ENCODE measurements at regions of chr10 and their contacts with region 1.

Region 1: GRCh38 chr10:75772153-75772887 is 340.9 kb downstream of the LRMDA start:
- DNase-seq: no peak
- H3K4me3 ChIP-seq: peak overlapping the region in 1 of 2 donors; percentile 16
- H3K27ac ChIP-seq: peak overlapping the region; percentile 51 to 68
- H3K4me1 ChIP-seq: peaks cover 5% of the 10 kb centered on the region
- H3K27me3 ChIP-seq: no peaks in the 10 kb centered on the region
- CTCF ChIP-seq: no peak
- POLR2A ChIP-seq: no peak

Region 2: GRCh38 chr10:75294866-75295701 is 477.2 kb before region 1 on chr10:
- intact Hi-C with region 1: loop called (anchors 5 kb)
- DNase-seq: peak; percentile 94
- H3K4me3 ChIP-seq: peak overlapping the region; percentile 53 to 69
- H3K27ac ChIP-seq: peak overlapping the region; percentile 92 to 97
- H3K4me1 ChIP-seq: peaks cover 3% of the 10 kb centered on the region
- H3K27me3 ChIP-seq: no peaks in the 10 kb centered on the region
- CTCF ChIP-seq: peak in 3 of 4 experiments; percentile 24 to 50 (median 41)
- POLR2A ChIP-seq: peak; percentile 50

Region 3: DNA sequence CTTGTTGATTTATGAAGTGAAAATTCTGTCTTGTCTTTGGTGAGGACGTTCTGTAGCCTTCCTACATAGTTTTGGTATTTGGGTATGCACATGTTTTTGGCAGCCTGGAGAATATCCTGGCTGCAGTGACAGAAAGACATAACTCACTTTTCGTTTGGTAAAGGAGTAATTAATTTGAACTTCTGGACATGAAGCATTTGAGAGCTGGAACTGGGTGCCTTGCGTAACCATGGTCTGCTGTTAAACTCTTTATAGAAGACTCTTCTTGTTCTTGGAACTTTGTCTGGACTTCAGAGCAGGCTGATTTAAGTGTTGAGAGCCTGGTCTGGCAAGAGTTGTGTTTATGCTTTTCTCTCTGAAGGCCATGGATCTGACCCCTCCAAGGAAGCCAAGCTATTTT is 109.6 kb before region 1 on chr10:
- intact Hi-C with region 1: loop called (anchors 2 kb)
- DNase-seq: peak; percentile 63
- H3K4me3 ChIP-seq: no peak overlapping the region
- H3K27ac ChIP-seq: peak overlapping the region; percentile 60 to 68
- H3K4me1 ChIP-seq: peaks cover 5% of the 10 kb centered on the region
- H3K27me3 ChIP-seq: no peaks in the 10 kb centered on the region
- CTCF ChIP-seq: no peak
- POLR2A ChIP-seq: no peak

Region 4: DNA sequence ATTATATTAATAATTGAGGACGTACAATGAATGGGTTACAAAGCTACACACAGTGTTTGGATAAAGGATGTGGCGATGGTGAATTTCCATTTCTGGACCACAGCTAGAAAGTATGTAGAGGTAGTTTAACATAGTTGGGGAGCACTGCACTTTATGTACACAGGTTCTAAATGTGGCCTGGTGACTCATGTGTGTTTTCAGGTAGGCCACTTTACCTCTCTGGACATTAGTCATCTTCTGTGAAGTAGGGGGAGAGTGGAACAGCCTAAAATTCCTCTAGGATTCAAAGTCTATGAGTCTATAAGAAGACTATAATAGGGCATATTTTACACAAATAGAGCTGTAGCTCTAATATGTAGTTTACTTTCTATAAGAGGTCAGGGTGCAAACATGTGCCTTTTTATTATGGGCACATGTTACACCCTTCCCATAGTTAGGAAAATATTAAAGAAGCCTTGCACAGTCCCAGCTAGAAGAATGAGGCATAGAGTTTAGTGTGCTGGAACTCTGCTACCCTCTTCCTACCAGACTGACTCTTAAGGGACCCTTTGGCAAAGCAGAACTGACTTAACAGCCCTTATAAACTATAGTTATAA is 254.0 kb after region 1 on chr10:
- intact Hi-C with region 1: no loop called
- DNase-seq: no peak
- H3K4me3 ChIP-seq: no peak overlapping the region
- H3K27ac ChIP-seq: no peak overlapping the region
- H3K4me1 ChIP-seq: no peaks in the 10 kb centered on the region
- H3K27me3 ChIP-seq: no peaks in the 10 kb centered on the region
- CTCF ChIP-seq: no peak
- POLR2A ChIP-seq: no peak

Region 5: DNA sequence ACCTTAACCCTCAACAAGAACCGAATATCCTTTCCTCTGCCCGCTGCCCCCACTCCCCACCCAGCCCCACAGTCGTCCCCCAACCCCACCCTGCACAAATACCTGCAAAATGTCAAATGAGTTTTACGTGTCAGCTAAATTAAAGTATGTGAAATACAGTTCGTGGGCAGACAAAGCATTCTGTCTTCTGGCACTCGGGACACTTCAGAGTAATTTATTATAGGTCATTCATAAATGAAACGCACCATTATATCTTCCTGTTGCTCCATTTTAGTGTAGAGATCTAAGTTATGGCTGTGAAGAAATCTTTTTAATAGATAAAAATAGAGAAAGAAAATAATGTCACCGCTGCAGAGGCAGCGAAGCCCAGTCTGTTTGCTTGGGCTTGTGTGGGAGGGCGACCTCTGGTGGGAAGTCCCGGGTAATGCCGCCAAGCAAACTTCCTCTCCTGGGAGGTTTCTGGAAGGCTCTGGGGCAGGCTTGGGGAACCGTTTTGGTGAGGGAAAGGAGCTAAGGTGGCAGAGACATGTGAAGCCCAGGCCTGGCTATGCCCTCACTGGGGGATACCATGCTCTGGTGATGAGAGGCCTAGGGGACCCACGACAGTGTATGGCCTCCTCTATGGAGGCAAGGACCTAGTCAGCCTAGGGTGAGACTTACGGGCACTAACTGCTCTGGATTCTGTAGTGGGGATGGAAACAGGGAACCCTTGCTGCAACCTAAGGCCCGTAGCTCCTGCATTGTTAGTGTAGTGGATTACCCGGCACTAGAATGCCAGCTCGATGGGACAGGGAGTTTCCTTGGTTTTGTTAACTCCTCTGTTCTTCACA is 264.0 kb after region 1 on chr10:
- intact Hi-C with region 1: loop called (anchors 5 kb)
- DNase-seq: peak; percentile 79
- H3K4me3 ChIP-seq: no peak overlapping the region
- H3K27ac ChIP-seq: peak overlapping the region; percentile 13 to 48
- H3K4me1 ChIP-seq: peaks cover 4% of the 10 kb centered on the region
- H3K27me3 ChIP-seq: no peaks in the 10 kb centered on the region
- CTCF ChIP-seq: peak; percentile 79 to 95 (median 91)
- POLR2A ChIP-seq: no peak

Region 6: DNA sequence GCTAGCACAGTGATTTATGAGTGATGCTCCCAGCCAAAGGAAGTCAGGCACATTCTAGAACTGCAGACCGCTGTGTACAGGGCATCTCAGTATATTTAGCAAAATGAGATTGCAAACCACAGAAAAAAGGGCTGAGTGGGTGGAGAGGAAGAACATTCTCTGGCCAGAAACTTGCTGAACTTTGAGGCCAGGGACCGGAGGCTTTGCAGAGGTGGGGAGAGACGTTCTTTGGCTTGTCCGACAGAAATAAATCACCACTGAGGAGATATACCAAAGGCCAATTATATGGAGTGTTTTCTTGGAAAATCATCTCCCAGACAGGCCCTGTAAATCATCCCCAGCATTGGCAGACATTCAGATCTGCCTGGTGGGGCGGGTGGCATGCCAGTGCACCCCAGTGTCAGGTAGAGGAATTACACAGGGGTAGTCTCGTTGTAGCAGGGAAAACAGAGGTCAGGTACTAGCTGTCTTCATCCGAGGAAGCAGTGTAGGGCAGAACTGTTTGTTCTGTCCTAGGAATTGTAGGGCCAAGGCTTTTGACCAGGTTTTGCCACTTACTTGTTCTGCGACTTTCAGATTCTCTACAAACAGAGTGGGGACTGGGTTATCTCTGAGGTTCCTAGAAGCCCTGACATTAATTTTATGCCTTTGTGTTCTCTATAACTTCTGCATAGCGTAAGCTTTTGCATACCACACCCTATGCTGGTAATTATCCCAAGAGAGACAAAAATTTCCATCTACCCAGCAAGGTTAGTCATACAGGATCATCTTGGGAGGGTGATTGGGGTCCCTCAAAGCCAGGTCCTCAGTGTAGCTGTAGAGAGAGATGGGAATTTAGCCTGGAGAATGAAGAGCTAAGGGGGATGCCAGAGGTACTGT is 314.7 kb after region 1 on chr10:
- intact Hi-C with region 1: loop called (anchors 5 kb)
- DNase-seq: peak; percentile 77
- H3K4me3 ChIP-seq: no peak overlapping the region
- H3K27ac ChIP-seq: peak overlapping the region; percentile 13 to 19
- H3K4me1 ChIP-seq: no peaks in the 10 kb centered on the region
- H3K27me3 ChIP-seq: no peaks in the 10 kb centered on the region
- CTCF ChIP-seq: peak; percentile 58 to 80 (median 68)
- POLR2A ChIP-seq: no peak

Region 7: GRCh38 chr10:76303682-76304316 is 531.5 kb after region 1 on chr10:
- intact Hi-C with region 1: loop called (anchors 10 kb)
- DNase-seq: peak; percentile 83
- H3K4me3 ChIP-seq: no peak overlapping the region
- H3K27ac ChIP-seq: peak overlapping the region in 1 of 2 donors; percentile 16
- H3K4me1 ChIP-seq: no peaks in the 10 kb centered on the region
- H3K27me3 ChIP-seq: no peaks in the 10 kb centered on the region
- CTCF ChIP-seq: peak in 3 of 4 experiments; percentile 39 to 73 (median 69)
- POLR2A ChIP-seq: no peak

Region 8: DNA sequence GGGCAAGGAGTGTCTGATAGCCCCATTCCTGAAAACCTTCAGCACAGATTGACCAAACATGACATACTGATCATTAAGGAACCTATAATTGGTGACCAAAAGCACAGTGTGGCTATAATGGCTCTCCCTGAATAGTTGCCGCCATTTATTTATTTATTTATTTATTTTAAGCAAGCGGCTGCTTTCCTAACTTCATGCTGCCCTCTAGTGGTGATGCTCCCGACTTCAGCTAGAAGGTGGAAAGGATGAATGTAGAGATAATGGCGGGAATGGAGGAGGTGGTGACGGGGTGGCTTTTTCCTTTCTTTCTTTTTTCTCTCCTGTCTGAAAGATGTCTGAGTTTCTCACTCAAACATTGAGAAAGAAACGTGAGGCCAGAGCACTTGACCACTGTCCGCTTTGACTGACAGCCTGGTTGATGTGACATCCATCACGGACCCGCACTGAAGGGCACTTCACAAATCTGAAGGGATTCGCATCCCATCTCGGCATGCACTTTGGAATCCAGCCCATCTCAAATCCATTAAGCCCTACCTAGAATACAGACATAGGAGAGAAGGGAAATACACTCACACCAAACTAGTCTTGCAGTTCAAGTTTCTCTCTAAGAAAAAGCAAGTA is 775.1 kb after region 1 on chr10:
- intact Hi-C with region 1: loop called (anchors 10 kb)
- DNase-seq: peak; percentile 82
- H3K4me3 ChIP-seq: no peak overlapping the region
- H3K27ac ChIP-seq: no peak overlapping the region
- H3K4me1 ChIP-seq: no peaks in the 10 kb centered on the region
- H3K27me3 ChIP-seq: no peaks in the 10 kb centered on the region
- CTCF ChIP-seq: peak; percentile 74 to 86 (median 82)
- POLR2A ChIP-seq: no peak